ENCODE measurements at regions of chr17 and their contacts with region 1.

Region 1: DNA sequence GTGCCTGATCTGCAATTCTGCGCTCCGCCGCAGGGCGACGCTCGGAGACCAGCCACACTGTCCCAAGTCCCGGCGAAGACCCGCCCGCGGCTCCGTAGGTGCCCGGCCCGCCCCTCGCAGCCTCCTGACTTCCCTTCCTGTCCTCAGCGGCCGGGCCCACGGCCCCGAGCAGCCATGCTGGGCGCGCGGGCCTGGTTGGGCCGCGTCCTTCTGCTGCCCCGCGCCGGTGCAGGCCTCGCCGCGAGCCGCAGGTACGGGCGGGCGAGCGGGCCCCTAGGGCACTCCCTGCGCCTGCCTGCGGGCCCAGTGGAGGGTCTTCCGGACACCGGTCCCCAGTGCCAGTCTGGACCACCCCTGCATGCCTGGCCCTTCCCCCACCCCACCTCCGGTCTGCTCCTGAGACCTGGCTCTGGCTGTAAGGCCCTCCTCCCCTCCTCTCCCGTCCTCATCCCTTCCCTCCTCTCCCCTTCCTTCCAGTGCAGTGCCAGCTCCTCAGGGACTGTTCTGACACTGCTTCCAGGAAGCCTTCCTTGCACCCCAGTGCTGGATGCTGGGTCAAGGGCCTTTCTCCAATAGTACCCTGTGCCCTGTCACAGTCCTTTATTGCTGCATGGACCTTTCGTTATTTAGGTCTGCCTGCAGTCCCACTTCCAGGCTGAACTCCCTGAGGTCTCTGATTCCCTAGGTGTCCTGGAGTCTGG is at the start of gene SPATA20:
- DNase-seq: peak; percentile 82 to 89
- H3K4me3 ChIP-seq: peak within 1 kb of the TSS; percentile 68
- H3K27ac ChIP-seq: no peak within 1 kb of the TSS
- H3K4me1 ChIP-seq: peaks cover 17% of the 10 kb centered on the region
- H3K27me3 ChIP-seq: no peaks in the 10 kb centered on the region
- CTCF ChIP-seq: peak; percentile 99
- total RNA-seq, gene SPATA20: 41.5 and 60.5 TPM in 2 replicates

Region 2: DNA sequence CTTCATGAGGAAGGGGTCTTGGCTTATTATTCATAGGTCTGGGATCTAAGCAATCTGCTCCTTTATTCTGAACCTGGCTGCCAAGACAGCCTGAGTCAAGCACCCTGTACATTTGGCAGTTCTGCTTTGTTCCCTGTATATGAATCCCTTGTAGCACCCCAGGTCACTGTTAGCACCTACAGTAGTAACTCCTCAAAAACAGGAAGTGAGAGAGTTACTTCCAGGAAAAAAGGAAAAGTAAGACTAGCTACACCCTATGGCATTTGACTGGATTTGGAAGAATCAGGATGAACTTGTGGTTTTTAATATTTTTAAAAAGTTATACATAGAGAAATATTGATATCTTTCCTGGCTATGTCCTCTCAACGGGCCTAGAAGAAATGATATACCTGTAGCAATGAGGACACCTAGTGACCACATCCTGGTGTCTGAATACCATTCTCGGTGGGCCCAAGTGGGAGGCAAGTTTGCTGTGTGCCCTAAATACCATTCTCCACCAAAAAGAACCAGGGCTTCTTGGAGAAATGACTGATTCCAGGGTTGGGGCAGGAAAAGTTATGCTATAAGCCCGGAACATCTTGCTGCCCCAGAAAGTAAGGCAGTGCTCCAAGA is 150.6 kb after region 1 on chr17:
- CTCF ChIA-PET with region 1: interaction called, 14 read pairs
- POLR2A ChIA-PET with region 1: no interaction called
- intact Hi-C with region 1: loop called (anchors 1 kb)
- DNase-seq: no peak
- H3K4me3 ChIP-seq: no peak overlapping the region
- H3K27ac ChIP-seq: peak overlapping the region; percentile 51; the same call in 1 of the 2 replicates
- H3K4me1 ChIP-seq: peaks cover 84% of the 10 kb centered on the region
- H3K27me3 ChIP-seq: no peaks in the 10 kb centered on the region
- CTCF ChIP-seq: peak; percentile 48; the same call in 1 of the 2 replicates

Region 3: GRCh38 chr17:50731575-50732460 is 184.6 kb after region 1 on chr17:
- CTCF ChIA-PET with region 1: no interaction called
- POLR2A ChIA-PET with region 1: interaction called, 30 read pairs
- intact Hi-C with region 1: no loop called
- DNase-seq: no peak
- H3K4me3 ChIP-seq: no peak overlapping the region
- H3K27ac ChIP-seq: 0 out of 2 replicates have a peak overlapping the region, but pooled peaks have one; percentile 20
- H3K4me1 ChIP-seq: 0 out of 2 replicates have a peak, but pooled peaks cover 6% of the 10 kb centered on the region
- H3K27me3 ChIP-seq: no peaks in the 10 kb centered on the region
- CTCF ChIP-seq: no peak

Region 4: DNA sequence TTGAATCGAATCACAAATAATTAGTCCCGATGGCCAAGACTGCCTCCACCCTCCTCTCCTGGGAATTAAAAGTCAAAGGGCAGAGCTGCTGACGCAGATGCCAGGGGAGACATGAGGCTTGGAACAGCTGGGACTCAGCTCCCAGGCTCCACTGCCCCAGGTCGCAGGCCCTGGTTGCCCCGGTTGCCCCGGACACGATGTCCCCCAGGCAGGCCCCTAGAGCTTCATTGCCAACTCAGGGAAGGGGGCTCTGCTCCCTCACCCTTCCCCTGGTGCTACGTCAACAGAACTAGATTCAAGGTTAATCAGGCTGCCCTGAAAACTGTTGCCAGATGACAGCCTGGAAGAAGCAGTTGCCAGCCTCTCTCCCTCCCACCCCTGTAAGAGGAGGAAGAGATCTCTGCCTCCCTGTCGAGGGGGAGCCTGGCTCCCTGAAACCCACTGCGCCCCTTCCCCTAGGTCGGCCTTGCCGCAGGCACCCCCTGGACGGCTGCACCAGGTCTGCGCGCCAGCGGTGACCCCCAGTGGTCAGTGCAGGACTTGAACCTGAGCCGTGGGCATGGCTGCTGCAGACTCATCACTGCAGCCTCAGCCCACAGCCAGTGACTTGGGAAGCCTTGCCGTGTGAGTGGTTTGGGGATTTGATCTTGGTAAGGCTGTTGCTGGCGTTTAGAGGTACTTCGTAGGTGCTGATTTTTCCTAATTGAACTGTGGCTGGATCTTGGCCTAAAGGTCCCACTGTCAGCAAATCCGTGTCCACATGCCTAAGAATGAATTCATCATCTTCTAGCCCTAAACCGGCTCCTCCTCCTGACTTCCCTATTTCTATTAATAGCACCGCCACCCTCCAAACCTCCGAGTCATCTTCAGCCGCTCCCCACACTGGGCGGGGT is 403.1 kb after region 1 on chr17:
- CTCF ChIA-PET with region 1: no interaction called
- POLR2A ChIA-PET with region 1: no interaction called
- intact Hi-C with region 1: loop called (anchors 10 kb)
- DNase-seq: peak; percentile 91 to 96
- H3K4me3 ChIP-seq: peak overlapping the region; percentile 34; the same call in 1 of the 2 replicates
- H3K27ac ChIP-seq: peak overlapping the region; percentile 73
- H3K4me1 ChIP-seq: peaks cover 59% of the 10 kb centered on the region
- H3K27me3 ChIP-seq: no peaks in the 10 kb centered on the region
- CTCF ChIP-seq: peak; percentile 90